MCF 10A (cell line): ENCODE measurements at regions of chr14 and their contacts with region 1.

Region 1: GRCh38 chr14:51442513-51443175 is 202.6 kb downstream of the TMX1 start:
- DNase-seq: peak; percentile 85
- H3K4me3 Mint-ChIP-seq: peak overlapping the region; percentile 1
- H3K27ac Mint-ChIP-seq: peak overlapping the region; percentile 90
- H3K4me1 Mint-ChIP-seq: peaks cover 32% of the 10 kb centered on the region
- H3K27me3 Mint-ChIP-seq: no peaks in the 10 kb centered on the region
- CTCF ChIP-seq: no peak

Region 2: GRCh38 chr14:51293149-51293911 is 149.3 kb before region 1 on chr14:
- CTCF ChIA-PET with region 1: no interaction called
- POLR2A ChIA-PET with region 1: no interaction called
- intact Hi-C with region 1: no loop called
- DNase-seq: no peak
- H3K4me3 Mint-ChIP-seq: no peak overlapping the region
- H3K27ac Mint-ChIP-seq: no peak overlapping the region
- H3K4me1 Mint-ChIP-seq: peaks cover 13% of the 10 kb centered on the region
- H3K27me3 Mint-ChIP-seq: no peaks in the 10 kb centered on the region
- CTCF ChIP-seq: no peak

Region 3: GRCh38 chr14:51453869-51454268 is 11.2 kb after region 1 on chr14:
- CTCF ChIA-PET with region 1: interaction called, 5 read pairs
- POLR2A ChIA-PET with region 1: interaction called, 10 read pairs
- intact Hi-C with region 1: no loop called
- DNase-seq: peak; percentile 87
- H3K4me3 Mint-ChIP-seq: no peak overlapping the region
- H3K27ac Mint-ChIP-seq: peak overlapping the region; percentile 33
- H3K4me1 Mint-ChIP-seq: peaks cover 36% of the 10 kb centered on the region
- H3K27me3 Mint-ChIP-seq: no peaks in the 10 kb centered on the region
- CTCF ChIP-seq: no peak

Region 4: DNA sequence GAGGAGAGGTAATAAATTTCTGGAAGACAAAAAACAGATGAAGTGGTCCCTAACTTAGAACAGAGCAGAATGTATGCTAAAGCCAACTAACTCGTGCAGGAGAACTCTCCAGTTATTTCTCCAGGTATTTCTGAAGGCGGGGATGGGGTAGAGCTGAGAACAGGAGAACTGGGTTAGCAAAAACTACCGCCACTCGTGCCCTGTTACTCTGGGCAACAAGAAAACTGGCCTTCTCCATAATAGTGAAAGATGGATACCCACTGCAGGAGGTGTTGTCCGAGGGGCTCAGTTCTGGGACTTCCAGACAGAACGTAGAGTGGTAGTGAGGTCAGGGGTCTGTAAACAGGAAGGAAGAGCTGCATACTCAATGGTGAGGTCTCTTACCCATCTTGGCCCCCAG is 21.8 kb after region 1 on chr14:
- CTCF ChIA-PET with region 1: no interaction called
- POLR2A ChIA-PET with region 1: no interaction called
- intact Hi-C with region 1: no loop called
- DNase-seq: no peak
- H3K4me3 Mint-ChIP-seq: no peak overlapping the region
- H3K27ac Mint-ChIP-seq: no peak overlapping the region
- H3K4me1 Mint-ChIP-seq: peaks cover 5% of the 10 kb centered on the region
- H3K27me3 Mint-ChIP-seq: no peaks in the 10 kb centered on the region
- CTCF ChIP-seq: no peak

Region 5: GRCh38 chr14:52640137-52640536 is 1197.5 kb after region 1 on chr14:
- CTCF ChIA-PET with region 1: no interaction called
- POLR2A ChIA-PET with region 1: no interaction called
- intact Hi-C with region 1: no loop called
- DNase-seq: no peak
- H3K4me3 Mint-ChIP-seq: no peak overlapping the region
- H3K27ac Mint-ChIP-seq: no peak overlapping the region
- H3K4me1 Mint-ChIP-seq: no peaks in the 10 kb centered on the region
- H3K27me3 Mint-ChIP-seq: no peaks in the 10 kb centered on the region
- CTCF ChIP-seq: no peak